GM13976 (cell line): ENCODE measurements at regions of chr9 and their contacts with region 1.

Region 1: GRCh38 chr9:110183208-110184145 is 24.5 kb downstream of the C9orf152 start:
- DNase-seq: peak; percentile 69
- CTCF ChIP-seq: peak; percentile 52

Region 2: DNA sequence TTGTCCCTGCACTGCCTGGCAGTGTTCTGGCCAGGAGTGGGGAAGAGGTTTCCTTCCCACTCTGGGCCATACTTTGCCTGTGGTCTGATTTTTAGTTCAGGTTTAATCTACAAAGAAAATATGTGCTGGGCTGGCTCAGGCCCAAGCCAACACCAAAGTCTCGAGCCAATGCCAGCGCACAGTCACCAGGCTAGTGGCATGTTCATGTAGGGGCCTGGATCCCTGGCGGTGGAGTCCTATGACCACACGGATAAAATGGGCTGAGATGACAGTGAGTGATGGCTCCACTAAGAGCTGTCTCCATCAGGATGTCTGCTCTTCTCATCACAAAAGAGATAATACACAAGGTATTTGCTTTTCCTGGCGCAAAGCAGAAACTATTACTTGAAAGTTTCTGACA is 592.5 kb before region 1 on chr9:
- in situ Hi-C with region 1: loop called (anchors 25 kb)
- DNase-seq: no peak
- CTCF ChIP-seq: no peak

Region 3: GRCh38 chr9:109926421-109926869 is 257.0 kb before region 1 on chr9:
- in situ Hi-C with region 1: no loop called
- DNase-seq: no peak
- CTCF ChIP-seq: no peak